GM10248 (cell line): ENCODE measurements at regions of chr9 and their contacts with region 1.

Region 1: GRCh38 chr9:126704873-126705766 is 91.4 kb downstream of the LMX1B start:
- DNase-seq: peak; percentile 90
- CTCF ChIP-seq: peak; percentile 94

Region 2: DNA sequence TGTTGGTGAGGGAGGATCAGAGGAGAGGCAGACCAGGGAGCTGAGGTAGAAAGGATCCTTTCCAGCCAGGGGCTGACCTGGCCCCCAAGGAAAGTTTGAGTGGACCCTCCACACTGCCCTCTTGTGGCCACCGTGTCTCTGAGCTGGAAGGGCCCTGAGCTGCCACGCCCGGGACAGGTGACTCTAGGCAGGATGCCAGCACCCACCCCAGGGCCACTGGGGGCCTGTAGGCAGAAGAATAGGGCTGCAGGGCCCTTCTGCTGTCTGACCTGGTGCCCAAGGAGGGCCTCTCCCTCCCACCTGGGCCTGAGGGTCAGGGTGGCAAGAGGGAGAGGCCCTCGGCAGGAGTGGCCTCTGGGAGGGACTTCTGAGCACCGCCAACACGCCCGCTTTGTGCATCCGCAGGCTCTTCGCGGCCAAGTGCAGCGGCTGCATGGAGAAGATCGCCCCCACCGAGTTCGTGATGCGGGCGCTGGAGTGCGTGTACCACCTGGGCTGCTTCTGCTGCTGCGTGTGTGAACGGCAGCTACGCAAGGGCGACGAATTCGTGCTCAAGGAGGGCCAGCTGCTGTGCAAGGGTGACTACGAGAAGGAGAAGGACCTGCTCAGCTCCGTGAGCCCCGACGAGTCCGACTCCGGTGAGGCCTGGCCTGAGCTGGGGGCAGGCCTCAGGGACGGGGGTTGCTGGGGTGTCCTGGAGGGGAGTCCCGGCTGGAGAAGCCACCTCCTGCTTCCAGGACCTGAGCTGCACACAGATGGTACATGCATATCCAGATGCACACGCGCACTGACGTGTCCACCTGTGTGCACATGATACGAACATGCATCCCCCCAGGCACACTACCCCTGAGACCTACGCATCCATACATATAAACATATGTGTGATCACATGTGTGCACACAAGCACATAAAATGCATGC is 14.4 kb before region 1 on chr9:
- CTCF ChIA-PET with region 1: interaction called, 39 read pairs
- POLR2A ChIA-PET with region 1: no interaction called
- DNase-seq: peak; percentile 79
- CTCF ChIP-seq: peak; percentile 65

Region 3: GRCh38 chr9:126722252-126723078 is 17.3 kb after region 1 on chr9:
- CTCF ChIA-PET with region 1: interaction called, 26 read pairs
- POLR2A ChIA-PET with region 1: no interaction called
- DNase-seq: peak; percentile 93
- CTCF ChIP-seq: no peak

Region 4: GRCh38 chr9:126738553-126738952 is 33.4 kb after region 1 on chr9:
- CTCF ChIA-PET with region 1: interaction called, 35 read pairs
- POLR2A ChIA-PET with region 1: no interaction called
- DNase-seq: no peak
- CTCF ChIP-seq: no peak

Region 5: GRCh38 chr9:126791406-126792151 is 86.5 kb after region 1 on chr9:
- CTCF ChIA-PET with region 1: interaction called, 63 read pairs
- POLR2A ChIA-PET with region 1: no interaction called
- DNase-seq: no peak
- CTCF ChIP-seq: no peak

Region 6: DNA sequence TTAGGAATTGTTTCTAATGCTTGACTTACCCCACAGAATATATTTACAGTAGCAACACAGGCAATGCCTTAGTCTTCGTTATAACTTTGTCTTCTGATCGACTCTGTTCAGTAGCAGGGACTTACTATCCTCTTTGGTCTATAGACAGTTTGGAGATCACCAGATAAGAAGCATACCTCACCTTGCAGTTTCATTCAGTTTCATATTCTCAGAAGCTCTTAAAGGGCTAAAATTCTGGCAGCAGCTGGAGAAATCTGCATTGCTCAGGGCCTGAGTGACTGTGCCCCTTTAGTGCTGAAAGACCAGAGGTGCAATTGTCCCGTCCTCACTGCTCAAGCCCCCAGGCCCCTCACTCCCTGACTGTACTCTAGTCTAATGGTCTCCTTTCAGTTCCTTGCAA is 125.7 kb after region 1 on chr9:
- CTCF ChIA-PET with region 1: no interaction called
- POLR2A ChIA-PET with region 1: no interaction called
- DNase-seq: no peak
- CTCF ChIP-seq: no peak